ENCODE measurements at regions of chr2 and their contacts with region 1.

Region 1: DNA sequence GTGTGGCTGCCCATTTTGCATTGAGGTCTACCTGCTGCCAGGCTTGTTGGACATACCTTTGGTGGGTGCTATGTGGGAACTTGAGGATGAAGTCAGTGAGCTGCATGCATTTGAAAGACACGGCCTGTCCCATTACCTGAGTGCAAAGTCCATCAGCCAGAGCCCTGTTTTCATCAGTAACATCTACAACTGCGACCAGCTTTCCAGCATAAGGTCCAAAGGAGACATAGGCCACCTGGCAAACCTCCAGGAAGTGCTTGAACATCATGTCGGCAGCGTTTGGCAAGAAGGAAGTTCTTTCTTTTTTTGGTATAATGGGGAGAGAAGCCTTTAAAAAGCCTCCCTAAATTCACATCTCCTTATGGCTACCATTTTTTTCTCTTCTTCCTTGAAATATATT is 143.1 kb downstream of the FAM161A start:
- DNase-seq: no peak
- ATAC-seq: no peak

Region 2: GRCh38 chr2:61764035-61764800 is 53.5 kb after region 1 on chr2:
- intact Hi-C with region 1: loop called (anchors 5 kb)
- DNase-seq: peak; percentile 99
- ATAC-seq: peak; percentile 99

Measured in Right ventricle myocardium superior (tissue), 1 donor.